ENCODE measurements at regions of chr20 and their contacts with region 1.

Region 1: GRCh38 chr20:24337069-24337468 is 132.4 kb upstream of the SYNDIG1 start:
- DNase-seq: no peak
- ATAC-seq: no peak

Region 2: DNA sequence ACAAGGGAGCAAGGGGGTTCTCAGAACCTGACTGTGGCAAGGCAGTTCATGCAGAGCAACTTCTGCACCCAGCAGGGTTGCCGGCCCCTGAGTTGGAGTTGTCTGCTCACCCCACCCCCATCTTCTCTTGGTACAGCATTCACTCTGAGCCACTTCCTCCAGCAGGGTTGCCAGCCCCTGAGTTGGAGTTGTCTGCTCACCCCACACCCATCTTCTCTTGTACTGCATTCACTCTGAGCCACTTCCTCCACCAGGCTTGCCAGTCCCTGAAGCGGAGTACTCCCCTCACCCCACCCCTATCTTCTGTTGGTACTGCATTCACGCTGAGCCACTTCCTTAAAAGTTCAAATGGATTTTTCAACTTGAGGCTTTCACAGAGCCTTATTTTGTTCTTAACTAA is 52.6 kb after region 1 on chr20:
- intact Hi-C with region 1: loop called in 1 of 2 experiments (anchors 10 kb)
- DNase-seq: peak; percentile 27
- ATAC-seq: peak; percentile 41 to 71